H1 (cell line): ENCODE measurements at regions of chr14 and their contacts with region 1.

Region 1: DNA sequence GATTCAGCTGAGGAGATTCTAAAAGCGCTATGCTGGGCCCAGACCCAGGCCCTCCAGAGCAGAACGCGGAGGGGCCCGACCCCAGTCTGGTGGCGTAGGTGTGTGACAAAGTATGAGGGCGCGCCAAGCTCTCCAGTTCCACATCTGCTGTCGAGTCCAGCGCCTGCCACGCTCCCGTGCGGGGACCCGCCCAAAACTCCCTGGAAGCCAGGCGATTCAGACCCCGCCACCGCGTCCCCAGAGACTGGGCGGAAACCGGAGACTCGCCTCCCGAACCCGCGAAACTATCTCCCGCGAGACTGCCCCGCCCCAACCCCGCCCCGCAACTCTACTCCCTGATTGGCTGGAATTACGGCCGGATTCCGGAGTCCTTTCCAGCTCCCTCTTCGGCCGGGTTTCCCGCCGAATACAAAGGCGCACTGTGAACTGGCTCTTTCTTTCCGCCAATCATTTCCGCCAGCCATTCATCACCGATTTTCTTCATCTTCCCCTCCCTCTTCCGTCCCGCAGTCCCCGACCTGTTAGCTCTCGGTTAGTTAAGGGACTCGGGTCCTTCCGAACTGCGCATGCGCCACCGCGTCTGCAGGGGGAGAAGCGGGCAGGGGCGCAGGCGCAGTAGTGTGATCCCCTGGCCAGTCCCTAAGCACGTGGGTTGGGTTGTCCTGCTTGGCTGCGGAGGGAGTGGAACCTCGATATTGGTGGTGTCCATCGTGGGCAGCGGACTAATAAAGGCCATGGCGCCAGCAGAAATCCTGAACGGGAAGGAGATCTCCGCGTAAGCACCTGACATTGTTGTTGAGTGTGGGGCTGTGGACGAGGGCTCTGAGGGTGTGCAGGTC is at the start of gene MTHFD1:
- DNase-seq: peak; percentile 98
- H3K4me3 ChIP-seq: peak within 1 kb of the TSS; percentile 67 to 90 (median 76)
- H3K27ac ChIP-seq: peak within 1 kb of the TSS; percentile 92
- H3K4me1 ChIP-seq: peaks cover 5 to 11% (median 10%) of the 10 kb centered on the region in 4 experiments
- H3K27me3 ChIP-seq: no peaks in the 10 kb centered on the region
- CTCF ChIP-seq: no peak
- EP300 ChIP-seq: no peak
- POLR2A ChIP-seq: peak; percentile 82 to 89; a peak in 2 of 3 replicates
- RAD21 ChIP-seq: no peak
- total RNA-seq, gene MTHFD1: 302 and 332 TPM in 2 replicates

Region 2: GRCh38 chr14:64209444-64210131 is 178.3 kb before region 1 on chr14:
- CTCF ChIA-PET with region 1: no interaction called
- POLR2A ChIA-PET with region 1: no interaction called
- DNase-seq: no peak
- H3K4me3 ChIP-seq: no peak overlapping the region
- H3K27ac ChIP-seq: no peak overlapping the region
- H3K4me1 ChIP-seq: no peaks in the 10 kb centered on the region
- H3K27me3 ChIP-seq: no peaks in the 10 kb centered on the region
- CTCF ChIP-seq: no peak
- EP300 ChIP-seq: no peak
- POLR2A ChIP-seq: no peak
- RAD21 ChIP-seq: no peak

Region 3: GRCh38 chr14:64338616-64339316 is 49.1 kb before region 1 on chr14:
- CTCF ChIA-PET with region 1: interaction called, 16 read pairs
- POLR2A ChIA-PET with region 1: interaction called, 30 read pairs
- DNase-seq: peak; percentile 92 to 96
- H3K4me3 ChIP-seq: peak overlapping the region; percentile 74 to 93 (median 81)
- H3K27ac ChIP-seq: peak overlapping the region; percentile 88
- H3K4me1 ChIP-seq: peaks cover 6 to 14% (median 9%) of the 10 kb centered on the region in 4 experiments; a peak in 6 of 7 replicates
- H3K27me3 ChIP-seq: no peaks in the 10 kb centered on the region
- CTCF ChIP-seq: no peak
- EP300 ChIP-seq: no peak
- POLR2A ChIP-seq: peak; percentile 44 to 85
- RAD21 ChIP-seq: no peak

Region 4: DNA sequence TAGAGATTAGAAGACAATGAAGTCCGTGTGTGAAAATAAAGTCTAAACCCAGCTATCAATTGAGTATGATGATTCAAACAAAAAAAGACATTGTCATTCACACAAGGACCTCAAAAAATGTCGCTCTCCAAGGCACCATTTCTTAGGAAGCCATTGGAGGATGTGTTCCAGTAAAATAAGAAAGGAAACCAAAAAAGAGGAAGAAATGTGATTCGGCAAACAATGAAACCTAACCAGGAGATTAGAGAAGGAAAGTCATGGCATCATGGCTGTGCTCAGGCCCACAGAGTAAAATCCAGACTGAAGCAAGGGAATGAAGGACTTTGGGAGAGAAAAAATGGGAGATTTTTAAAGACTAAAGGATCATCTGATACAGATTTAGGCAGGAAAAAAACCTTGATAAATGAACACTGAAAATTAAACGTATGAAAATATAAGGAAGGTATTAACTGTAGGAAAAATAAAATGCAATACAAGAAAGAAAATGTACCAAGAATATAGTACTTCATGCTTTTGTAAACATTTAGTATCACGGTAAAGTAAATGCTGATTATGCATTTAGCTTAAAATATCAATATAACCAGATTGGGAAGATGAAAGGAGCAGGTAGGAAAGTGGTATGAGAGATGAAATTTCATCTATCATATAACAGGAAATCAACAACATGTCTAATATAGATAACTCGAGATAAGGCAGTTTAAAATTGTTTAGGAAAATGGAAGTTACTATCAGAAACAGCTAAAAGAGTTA is 38.0 kb before region 1 on chr14:
- CTCF ChIA-PET with region 1: interaction called, 16 read pairs
- POLR2A ChIA-PET with region 1: interaction called, 7 read pairs
- DNase-seq: no peak
- H3K4me3 ChIP-seq: no peak overlapping the region
- H3K27ac ChIP-seq: no peak overlapping the region
- H3K4me1 ChIP-seq: no peaks in the 10 kb centered on the region
- H3K27me3 ChIP-seq: no peaks in the 10 kb centered on the region
- CTCF ChIP-seq: no peak
- EP300 ChIP-seq: no peak
- POLR2A ChIP-seq: no peak
- RAD21 ChIP-seq: no peak

Region 5: GRCh38 chr14:64369201-64369600 is 18.7 kb before region 1 on chr14:
- CTCF ChIA-PET with region 1: interaction called, 3 read pairs
- POLR2A ChIA-PET with region 1: interaction called, 19 read pairs
- DNase-seq: no peak
- H3K4me3 ChIP-seq: no peak overlapping the region
- H3K27ac ChIP-seq: no peak overlapping the region
- H3K4me1 ChIP-seq: no peaks in the 10 kb centered on the region
- H3K27me3 ChIP-seq: no peaks in the 10 kb centered on the region
- CTCF ChIP-seq: no peak
- EP300 ChIP-seq: no peak
- POLR2A ChIP-seq: no peak
- RAD21 ChIP-seq: no peak

Region 6: GRCh38 chr14:64409126-64409920 is 21.4 kb after region 1 on chr14:
- CTCF ChIA-PET with region 1: interaction called, 12 read pairs
- POLR2A ChIA-PET with region 1: interaction called, 19 read pairs
- DNase-seq: no peak
- H3K4me3 ChIP-seq: no peak overlapping the region
- H3K27ac ChIP-seq: no peak overlapping the region
- H3K4me1 ChIP-seq: peaks cover 0 to 3% (median 0%) of the 10 kb centered on the region in 4 experiments; a peak in 2 of 7 replicates
- H3K27me3 ChIP-seq: no peaks in the 10 kb centered on the region
- CTCF ChIP-seq: no peak
- EP300 ChIP-seq: no peak
- POLR2A ChIP-seq: no peak
- RAD21 ChIP-seq: no peak